Activated CD4-positive, alpha-beta memory T cell treated with anti-CD3 and anti-CD28 coated beads for 36 hours (primary cell): ENCODE measurements at regions of chr13 and their contacts with region 1.

Region 1: GRCh38 chr13:114339857-114340534 is 25.7 kb downstream of the CHAMP1 start:
- DNase-seq: peak; percentile 63
- H3K4me3 Mint-ChIP-seq: peak overlapping the region; percentile 23
- H3K27ac Mint-ChIP-seq: no peak overlapping the region
- H3K4me1 Mint-ChIP-seq: peaks cover 13% of the 10 kb centered on the region
- H3K27me3 Mint-ChIP-seq: peaks cover 2% of the 10 kb centered on the region

Region 2: GRCh38 chr13:113880651-113881611 is 459.1 kb before region 1 on chr13:
- CTCF ChIA-PET with region 1: no interaction called
- POLR2A ChIA-PET with region 1: no interaction called
- intact Hi-C with region 1: no loop called
- DNase-seq: peak; percentile 36
- H3K4me3 Mint-ChIP-seq: no peak overlapping the region
- H3K27ac Mint-ChIP-seq: no peak overlapping the region
- H3K4me1 Mint-ChIP-seq: peaks cover 22% of the 10 kb centered on the region
- H3K27me3 Mint-ChIP-seq: no peaks in the 10 kb centered on the region

Region 3: DNA sequence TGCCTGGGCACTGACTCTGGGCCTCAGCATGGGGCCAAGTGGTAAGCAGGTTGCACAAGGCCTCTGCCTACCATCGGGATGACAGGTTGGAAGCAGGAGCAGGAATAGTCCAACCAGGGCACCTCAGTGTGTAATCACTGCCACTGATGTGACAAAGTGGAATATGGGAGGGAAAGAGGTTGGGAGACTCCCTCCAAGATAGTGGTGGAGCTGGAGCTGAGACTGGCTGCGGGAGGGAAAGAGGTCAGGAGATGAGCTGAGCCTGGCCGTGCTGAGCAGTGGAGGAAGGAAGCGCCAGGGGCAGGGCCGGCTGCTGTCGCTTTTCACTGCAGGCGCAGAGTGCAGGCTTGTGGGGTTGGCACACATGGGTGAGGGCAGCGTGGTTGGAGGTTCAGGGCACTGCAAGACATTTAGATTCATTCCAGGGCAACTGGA is 51.8 kb before region 1 on chr13:
- CTCF ChIA-PET with region 1: no interaction called
- POLR2A ChIA-PET with region 1: no interaction called
- intact Hi-C with region 1: loop called (anchors 1 kb)
- DNase-seq: no peak
- H3K4me3 Mint-ChIP-seq: no peak overlapping the region
- H3K27ac Mint-ChIP-seq: no peak overlapping the region
- H3K4me1 Mint-ChIP-seq: peaks cover 28% of the 10 kb centered on the region
- H3K27me3 Mint-ChIP-seq: no peaks in the 10 kb centered on the region